Activated B cell treated with CpG ODN at 0.5 μM for 24 hours (primary cell): ENCODE measurements at regions of chr2 and their contacts with region 1.

Region 1: GRCh38 chr2:156435715-156436496 is at the start of gene GPD2:
- DNase-seq: peak; percentile 72
- ATAC-seq: peak; percentile 79
- H3K4me3 Mint-ChIP-seq: peak within 1 kb of the TSS; percentile 95
- H3K27ac Mint-ChIP-seq: peak within 1 kb of the TSS; percentile 90
- H3K4me1 Mint-ChIP-seq: peaks cover 31% of the 10 kb centered on the region
- H3K27me3 Mint-ChIP-seq: no peaks in the 10 kb centered on the region
- CTCF ChIP-seq: no peak
- total RNA-seq, gene GPD2: 17.8 and 18.3 TPM in 2 replicates

Region 2: GRCh38 chr2:156341452-156342253 is 94.3 kb before region 1 on chr2:
- CTCF ChIA-PET with region 1: no interaction called
- POLR2A ChIA-PET with region 1: interaction called, 23 read pairs
- intact Hi-C with region 1: loop called (anchors 1 kb)
- DNase-seq: peak; percentile 80
- ATAC-seq: peak; percentile 79
- H3K4me3 Mint-ChIP-seq: peak overlapping the region; percentile 92
- H3K27ac Mint-ChIP-seq: peak overlapping the region; percentile 96
- H3K4me1 Mint-ChIP-seq: peaks cover 23% of the 10 kb centered on the region
- H3K27me3 Mint-ChIP-seq: no peaks in the 10 kb centered on the region
- CTCF ChIP-seq: no peak

Region 3: DNA sequence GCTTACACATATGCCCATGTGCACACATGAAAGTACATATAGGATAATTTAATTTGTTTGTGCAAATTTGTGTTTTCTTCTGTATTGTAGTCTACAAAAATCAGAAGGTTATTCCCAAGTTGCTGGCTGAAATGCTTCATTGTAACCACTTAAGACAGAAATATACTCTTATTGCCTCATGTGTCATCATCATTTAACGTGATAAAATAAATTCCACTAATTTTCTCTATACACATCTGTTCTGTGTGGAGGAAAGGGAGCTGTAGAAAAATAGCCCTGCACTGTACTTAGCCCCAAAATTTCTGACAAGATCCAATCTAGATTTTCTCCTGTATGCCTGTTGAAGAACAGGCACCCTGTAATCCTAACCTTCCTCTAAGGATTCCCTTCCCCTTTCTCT is 83.0 kb before region 1 on chr2:
- CTCF ChIA-PET with region 1: no interaction called
- POLR2A ChIA-PET with region 1: no interaction called
- intact Hi-C with region 1: no loop called
- DNase-seq: no peak
- ATAC-seq: no peak
- H3K4me3 Mint-ChIP-seq: no peak overlapping the region
- H3K27ac Mint-ChIP-seq: no peak overlapping the region
- H3K4me1 Mint-ChIP-seq: no peaks in the 10 kb centered on the region
- H3K27me3 Mint-ChIP-seq: no peaks in the 10 kb centered on the region
- CTCF ChIP-seq: no peak

Region 4: DNA sequence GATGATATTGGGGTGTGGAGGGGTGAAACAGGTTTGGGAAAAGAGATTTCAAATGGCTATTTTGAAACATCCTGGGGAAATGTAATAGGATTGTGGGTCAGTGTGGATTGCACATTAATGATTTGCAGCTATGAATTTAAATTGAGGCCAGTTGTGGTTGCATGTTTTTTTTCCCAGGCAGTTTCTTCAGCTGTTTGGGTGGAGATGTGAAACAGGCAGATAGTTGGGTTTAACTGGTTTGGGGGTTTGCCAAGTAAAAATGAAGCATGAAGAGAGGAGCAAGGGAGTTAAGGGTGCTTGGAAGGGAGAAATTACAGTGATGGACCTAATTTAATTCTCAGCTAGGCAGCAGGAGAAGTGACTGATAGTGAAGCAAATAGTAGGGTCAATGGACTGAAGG is 17.1 kb after region 1 on chr2:
- CTCF ChIA-PET with region 1: no interaction called
- POLR2A ChIA-PET with region 1: no interaction called
- intact Hi-C with region 1: no loop called
- DNase-seq: no peak
- ATAC-seq: no peak
- H3K4me3 Mint-ChIP-seq: no peak overlapping the region
- H3K27ac Mint-ChIP-seq: no peak overlapping the region
- H3K4me1 Mint-ChIP-seq: peaks cover 37% of the 10 kb centered on the region
- H3K27me3 Mint-ChIP-seq: no peaks in the 10 kb centered on the region
- CTCF ChIP-seq: no peak

Region 5: DNA sequence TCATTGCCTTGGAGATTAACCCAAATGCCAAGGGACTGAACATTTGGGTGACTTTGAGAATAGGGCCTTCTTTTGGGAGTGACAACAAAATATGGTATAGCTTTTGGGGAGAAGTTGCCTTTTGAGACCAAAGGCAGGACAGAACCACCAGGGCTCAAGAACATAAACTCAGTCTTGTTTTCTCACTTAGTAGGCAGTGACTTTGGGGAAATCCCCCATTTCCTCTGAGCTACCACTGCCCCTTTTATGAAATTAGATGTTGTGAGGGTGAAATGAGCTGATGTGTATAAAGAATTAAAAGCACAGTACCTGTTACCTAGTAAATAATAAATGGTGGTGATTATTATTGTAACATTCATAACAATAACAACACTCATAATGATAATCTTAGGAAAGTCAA is 36.8 kb after region 1 on chr2:
- CTCF ChIA-PET with region 1: no interaction called
- POLR2A ChIA-PET with region 1: interaction called, 3 read pairs
- intact Hi-C with region 1: loop called (anchors 2 kb)
- DNase-seq: no peak
- ATAC-seq: peak; percentile 76
- H3K4me3 Mint-ChIP-seq: no peak overlapping the region
- H3K27ac Mint-ChIP-seq: no peak overlapping the region
- H3K4me1 Mint-ChIP-seq: peaks cover 45% of the 10 kb centered on the region
- H3K27me3 Mint-ChIP-seq: no peaks in the 10 kb centered on the region
- CTCF ChIP-seq: no peak

Region 6: GRCh38 chr2:156526950-156527636 is 91.2 kb after region 1 on chr2:
- CTCF ChIA-PET with region 1: no interaction called
- POLR2A ChIA-PET with region 1: interaction called, 5 read pairs
- intact Hi-C with region 1: loop called (anchors 2 kb)
- DNase-seq: no peak
- ATAC-seq: peak; percentile 83
- H3K4me3 Mint-ChIP-seq: peak overlapping the region; percentile 38
- H3K27ac Mint-ChIP-seq: peak overlapping the region; percentile 41
- H3K4me1 Mint-ChIP-seq: peaks cover 9% of the 10 kb centered on the region
- H3K27me3 Mint-ChIP-seq: no peaks in the 10 kb centered on the region
- CTCF ChIP-seq: no peak